ENCODE measurements at regions of chr12 and their contacts with region 1.

Region 1: GRCh38 chr12:49219417-49220026 is 30.6 kb upstream of the TUBA1A start:
- DNase-seq: no peak
- ATAC-seq: no peak
- H3K4me3 ChIP-seq: no peak overlapping the region
- H3K27ac ChIP-seq: no peak overlapping the region
- H3K4me1 ChIP-seq: no peaks in the 10 kb centered on the region; the same call in 1 of the 2 replicates
- H3K27me3 ChIP-seq: no peaks in the 10 kb centered on the region
- CTCF ChIP-seq: no peak

Region 2: GRCh38 chr12:49008943-49009342 is 210.6 kb before region 1 on chr12:
- CTCF ChIA-PET with region 1: interaction called, 13 read pairs
- POLR2A ChIA-PET with region 1: no interaction called
- in situ Hi-C with region 1: no loop called
- intact Hi-C with region 1: no loop called
- DNase-seq: no peak
- ATAC-seq: no peak; the same call in 1 of the 2 replicates
- H3K4me3 ChIP-seq: no peak overlapping the region
- H3K27ac ChIP-seq: no peak overlapping the region
- H3K4me1 ChIP-seq: no peaks in the 10 kb centered on the region
- H3K27me3 ChIP-seq: no peaks in the 10 kb centered on the region
- CTCF ChIP-seq: no peak

Region 3: DNA sequence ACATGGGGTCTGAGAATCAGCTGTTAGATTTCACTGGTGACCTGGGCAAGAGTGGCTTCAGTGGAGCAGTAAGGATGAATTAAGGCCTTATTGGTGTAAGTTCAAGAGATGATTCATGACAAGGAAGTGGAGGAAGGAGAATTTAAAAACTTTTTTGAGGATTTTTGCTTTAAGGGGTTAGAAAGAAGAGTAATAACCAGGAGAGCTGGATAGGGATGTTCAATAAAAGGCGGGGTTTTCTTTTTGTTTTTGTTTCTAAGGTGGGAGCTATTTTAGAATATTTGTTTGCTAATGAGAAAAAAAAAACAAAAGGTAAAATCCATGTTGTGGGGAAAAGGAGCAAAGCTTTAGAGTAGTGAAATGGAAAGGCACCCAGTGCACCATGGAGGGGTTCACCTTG is 73.1 kb before region 1 on chr12:
- CTCF ChIA-PET with region 1: no interaction called
- POLR2A ChIA-PET with region 1: no interaction called
- in situ Hi-C with region 1: no loop called
- intact Hi-C with region 1: no loop called
- DNase-seq: no peak
- ATAC-seq: no peak
- H3K4me3 ChIP-seq: no peak overlapping the region
- H3K27ac ChIP-seq: no peak overlapping the region
- H3K4me1 ChIP-seq: no peaks in the 10 kb centered on the region
- H3K27me3 ChIP-seq: no peaks in the 10 kb centered on the region
- CTCF ChIP-seq: no peak

Region 4: DNA sequence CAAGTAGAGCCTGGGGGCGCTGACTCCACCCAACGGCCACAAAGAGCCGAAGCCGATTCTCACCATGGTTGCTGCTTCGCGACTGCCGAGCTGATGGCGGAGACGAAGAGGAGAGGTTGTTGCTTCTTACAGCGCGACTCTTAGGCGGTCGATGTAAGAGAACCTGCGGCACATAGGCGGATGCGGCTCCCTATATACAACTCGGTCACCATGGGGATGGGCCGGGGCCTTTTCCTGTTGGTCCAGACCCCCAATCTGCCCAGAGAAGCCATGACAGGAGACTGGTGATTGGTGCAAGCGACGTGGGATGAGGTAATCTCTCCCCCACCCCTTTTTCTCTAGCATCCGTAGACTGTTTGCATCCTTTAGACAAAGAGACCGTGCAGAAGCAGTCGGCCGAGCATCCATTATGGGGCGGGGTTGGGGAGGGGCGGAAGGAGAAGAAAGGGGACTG is 30.6 kb before region 1 on chr12 and contains the start of gene TUBA1A:
- CTCF ChIA-PET with region 1: no interaction called
- POLR2A ChIA-PET with region 1: interaction called, 14 read pairs
- in situ Hi-C with region 1: no loop called
- intact Hi-C with region 1: no loop called
- DNase-seq: peak; percentile 95
- ATAC-seq: peak; percentile 96
- H3K4me3 ChIP-seq: peak within 1 kb of the TSS; percentile 79 to 90
- H3K27ac ChIP-seq: peak within 1 kb of the TSS; percentile 85
- H3K4me1 ChIP-seq: peaks cover 12% of the 10 kb centered on the region
- H3K27me3 ChIP-seq: no peaks in the 10 kb centered on the region
- CTCF ChIP-seq: no peak
- total RNA-seq, gene TUBA1A: 133 TPM

Region 5: DNA sequence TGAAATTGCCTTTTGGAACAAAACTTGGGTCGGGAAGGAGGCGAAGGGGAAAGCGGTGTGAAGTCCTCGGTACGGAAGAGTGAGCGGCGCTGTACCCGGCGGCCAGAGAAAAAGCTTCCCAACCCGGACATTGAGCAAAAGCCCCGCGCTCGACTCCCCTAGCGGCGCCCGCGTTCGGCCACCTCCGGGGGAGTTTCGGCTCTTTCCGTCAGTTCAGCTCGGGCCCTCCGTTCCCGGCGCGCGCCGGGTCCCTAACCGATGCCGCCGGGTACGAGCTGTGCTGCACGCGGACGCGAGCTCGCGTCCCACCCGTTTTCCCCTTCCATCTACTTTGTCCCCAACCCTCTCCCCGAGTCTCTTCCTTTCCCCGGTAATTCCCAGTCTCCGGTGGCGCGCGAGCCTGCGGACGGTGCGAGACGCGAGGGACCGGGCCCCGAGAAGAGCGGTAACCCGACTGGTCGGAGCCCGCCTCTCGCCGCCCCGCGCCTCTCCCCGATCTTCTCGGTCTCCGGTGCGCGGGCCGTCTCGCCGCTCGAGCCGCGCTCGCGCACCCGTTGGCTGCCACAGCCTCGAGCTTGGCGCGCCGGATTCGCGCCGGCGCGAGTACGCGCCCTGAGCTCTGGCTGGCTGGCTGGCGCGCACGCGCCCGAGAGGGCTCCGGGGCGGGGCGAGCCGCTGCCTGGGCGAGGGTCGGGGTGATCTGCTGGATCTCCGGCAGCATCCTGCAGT is 147.3 kb after region 1 on chr12:
- CTCF ChIA-PET with region 1: no interaction called
- POLR2A ChIA-PET with region 1: no interaction called
- in situ Hi-C with region 1: no loop called
- intact Hi-C with region 1: no loop called
- DNase-seq: no peak
- ATAC-seq: peak; percentile 94
- H3K4me3 ChIP-seq: peak overlapping the region; percentile 78 to 82
- H3K27ac ChIP-seq: peak overlapping the region; percentile 92
- H3K4me1 ChIP-seq: peaks cover 18% of the 10 kb centered on the region
- H3K27me3 ChIP-seq: no peaks in the 10 kb centered on the region
- CTCF ChIP-seq: peak; percentile 44; the same call in 1 of the 2 replicates